HepG2 (cell line): ENCODE measurements at regions of chr3 and their contacts with region 1.

Region 1: DNA sequence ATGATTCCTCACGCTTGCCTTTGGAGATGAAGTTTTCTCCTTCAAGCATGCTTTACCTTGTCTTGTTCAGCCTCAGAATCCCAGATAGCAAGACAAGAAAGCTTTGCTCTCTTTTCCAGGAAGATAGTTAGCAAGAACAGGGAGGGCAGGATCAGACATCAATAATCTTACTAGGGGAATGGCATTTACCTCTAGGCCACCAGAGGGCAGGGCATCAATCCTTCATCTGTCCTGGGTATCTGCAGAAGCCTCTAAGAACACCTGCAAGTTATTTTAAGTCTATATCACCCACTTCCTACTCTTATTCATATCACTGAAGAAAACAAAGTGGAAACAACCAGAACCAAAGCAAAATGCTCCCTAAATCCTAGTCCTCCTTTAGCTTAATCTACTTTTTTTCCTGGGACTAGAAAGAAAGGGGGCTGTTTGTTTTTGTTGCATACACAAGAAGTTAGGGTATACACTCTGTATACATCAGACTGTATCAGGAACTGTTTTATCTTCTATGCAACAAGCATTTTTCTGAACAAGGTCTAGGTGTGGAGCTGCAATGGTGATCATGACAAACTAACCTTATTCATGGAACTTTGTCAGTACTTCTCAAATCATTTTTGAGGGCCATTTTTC is 862.5 kb downstream of the CADM2 start:
- DNase-seq: peak; percentile 23
- ATAC-seq: peak; percentile 92
- H3K4me3 ChIP-seq: no peak overlapping the region
- H3K27ac ChIP-seq: no peak overlapping the region
- H3K4me1 ChIP-seq: no peaks in the 10 kb centered on the region
- H3K27me3 ChIP-seq: no peaks in the 10 kb centered on the region
- CTCF ChIP-seq: peak; percentile 58
- EP300 ChIP-seq: no peak
- POLR2A ChIP-seq: no peak
- RAD21 ChIP-seq: no peak

Region 2: GRCh38 chr3:86245360-86245759 is 424.1 kb after region 1 on chr3:
- CTCF ChIA-PET with region 1: interaction called, 9 read pairs
- POLR2A ChIA-PET with region 1: no interaction called
- in situ Hi-C with region 1: loop called (anchors 10 kb)
- intact Hi-C with region 1: loop called (anchors 1 kb)
- DNase-seq: no peak
- ATAC-seq: peak; percentile 46; the same call in 1 of the 3 replicates
- H3K4me3 ChIP-seq: no peak overlapping the region
- H3K27ac ChIP-seq: no peak overlapping the region
- H3K4me1 ChIP-seq: no peaks in the 10 kb centered on the region
- H3K27me3 ChIP-seq: no peaks in the 10 kb centered on the region
- CTCF ChIP-seq: peak; percentile 36
- EP300 ChIP-seq: no peak
- POLR2A ChIP-seq: no peak
- RAD21 ChIP-seq: no peak

Region 3: GRCh38 chr3:86388820-86389219 is 567.6 kb after region 1 on chr3:
- CTCF ChIA-PET with region 1: no interaction called
- POLR2A ChIA-PET with region 1: no interaction called
- in situ Hi-C with region 1: no loop called
- intact Hi-C with region 1: loop called (anchors 10 kb)
- DNase-seq: peak; percentile 2
- ATAC-seq: peak; percentile 68
- H3K4me3 ChIP-seq: no peak overlapping the region
- H3K27ac ChIP-seq: no peak overlapping the region
- H3K4me1 ChIP-seq: no peaks in the 10 kb centered on the region
- H3K27me3 ChIP-seq: no peaks in the 10 kb centered on the region
- CTCF ChIP-seq: peak; percentile 43
- EP300 ChIP-seq: no peak
- POLR2A ChIP-seq: no peak
- RAD21 ChIP-seq: no peak

Region 4: GRCh38 chr3:86563400-86563970 is 742.2 kb after region 1 on chr3:
- CTCF ChIA-PET with region 1: interaction called, 9 read pairs
- POLR2A ChIA-PET with region 1: no interaction called
- in situ Hi-C with region 1: loop called (anchors 10 kb)
- intact Hi-C with region 1: loop called (anchors 1 kb)
- DNase-seq: peak; percentile 34
- ATAC-seq: peak; percentile 49; the same call in 2 of the 3 replicates
- H3K4me3 ChIP-seq: no peak overlapping the region
- H3K27ac ChIP-seq: no peak overlapping the region
- H3K4me1 ChIP-seq: no peaks in the 10 kb centered on the region
- H3K27me3 ChIP-seq: no peaks in the 10 kb centered on the region; a peak in 1 of 5 replicates
- CTCF ChIP-seq: peak; percentile 53
- EP300 ChIP-seq: no peak
- POLR2A ChIP-seq: no peak
- RAD21 ChIP-seq: no peak